ENCODE measurements at regions of chr13 and their contacts with region 1.

Region 1: DNA sequence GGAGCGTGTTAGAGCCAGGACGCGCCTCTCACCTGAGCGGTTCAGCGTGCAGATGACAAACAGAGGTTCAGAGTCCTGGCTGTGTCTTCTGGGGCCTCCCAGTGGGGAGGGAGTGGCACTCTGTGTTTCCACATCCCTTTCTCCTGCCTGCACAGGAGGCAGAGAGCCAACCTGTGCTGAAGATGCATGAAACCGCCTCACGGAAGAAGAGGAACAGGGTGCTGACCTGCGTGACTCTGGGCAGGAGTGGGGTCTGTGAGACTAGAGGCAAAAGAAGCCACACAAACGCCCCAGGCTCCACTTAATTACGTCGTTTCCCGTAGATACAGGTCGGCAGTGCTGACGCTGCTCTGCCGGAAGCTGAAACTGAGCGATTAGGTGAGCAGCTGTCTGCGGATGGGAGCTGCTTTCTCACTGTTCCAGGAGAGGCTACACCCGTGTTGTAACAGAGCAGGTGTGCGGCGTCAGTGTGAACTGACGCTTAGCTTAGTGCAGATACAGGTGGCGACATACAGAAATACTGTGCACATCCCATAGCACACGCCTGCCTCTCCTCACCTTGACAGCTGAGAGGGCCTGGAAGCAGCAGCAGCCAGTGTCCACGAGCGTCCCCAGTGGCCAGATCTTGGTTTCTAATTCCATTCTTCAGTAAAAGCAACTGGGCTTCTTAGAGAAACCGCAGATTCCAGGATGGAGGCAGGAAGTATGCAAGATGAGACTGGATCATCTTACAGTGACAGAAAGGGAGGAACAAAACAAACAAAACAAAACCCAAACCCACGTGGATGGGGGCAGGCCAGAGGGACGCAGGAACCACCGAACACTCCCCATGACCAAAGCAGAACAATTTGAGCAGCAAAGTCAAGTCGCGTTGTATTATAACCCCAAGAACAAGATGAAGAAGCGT is 37.7 kb upstream of the MCF2L start:
- DNase-seq: peak; percentile 80 to 81
- H3K4me3 ChIP-seq: peak overlapping the region; percentile 32
- H3K4me3 Mint-ChIP-seq: peak overlapping the region; percentile 78
- H3K27ac Mint-ChIP-seq: peak overlapping the region; percentile 4
- H3K4me1 ChIP-seq: peaks cover 25% of the 10 kb centered on the region
- H3K4me1 Mint-ChIP-seq: peaks cover 17% of the 10 kb centered on the region
- H3K27me3 ChIP-seq: no peaks in the 10 kb centered on the region
- H3K27me3 Mint-ChIP-seq: no peaks in the 10 kb centered on the region
- CTCF ChIP-seq: peak; percentile 75 to 97

Region 2: DNA sequence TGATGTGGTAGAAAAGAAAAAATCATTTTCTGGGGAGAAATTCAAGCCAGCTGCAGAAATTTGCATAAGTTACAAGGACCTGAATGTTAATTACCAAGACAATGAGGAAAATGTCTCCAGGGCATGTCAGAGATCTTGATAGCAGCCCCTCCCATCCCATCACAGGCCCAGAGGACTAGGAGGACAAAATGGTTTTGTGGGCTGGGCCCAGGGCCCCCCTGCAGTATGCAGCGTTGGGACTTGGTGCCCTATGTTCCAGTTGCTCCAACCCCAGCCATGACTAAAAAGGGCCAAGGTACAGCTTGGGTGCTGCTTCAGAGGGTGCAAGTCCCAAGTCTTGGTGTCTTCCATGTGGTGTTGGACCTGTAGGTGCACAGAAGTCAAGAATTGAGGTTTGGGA is 940.9 kb before region 1 on chr13:
- CTCF ChIA-PET with region 1: no interaction called
- POLR2A ChIA-PET with region 1: no interaction called
- intact Hi-C with region 1: no loop called
- DNase-seq: no peak
- H3K4me3 ChIP-seq: no peak overlapping the region
- H3K4me3 Mint-ChIP-seq: no peak overlapping the region
- H3K27ac Mint-ChIP-seq: no peak overlapping the region
- H3K4me1 ChIP-seq: no peaks in the 10 kb centered on the region
- H3K4me1 Mint-ChIP-seq: no peaks in the 10 kb centered on the region
- H3K27me3 ChIP-seq: no peaks in the 10 kb centered on the region
- H3K27me3 Mint-ChIP-seq: no peaks in the 10 kb centered on the region
- CTCF ChIP-seq: no peak

Region 3: GRCh38 chr13:112893570-112894422 is 37.5 kb before region 1 on chr13:
- CTCF ChIA-PET with region 1: interaction called, 11 read pairs
- POLR2A ChIA-PET with region 1: interaction called, 4 read pairs
- intact Hi-C with region 1: loop called (anchors 1 kb)
- DNase-seq: peak; percentile 85 to 88
- H3K4me3 ChIP-seq: peak overlapping the region; percentile 80
- H3K4me3 Mint-ChIP-seq: peak overlapping the region; percentile 84
- H3K27ac Mint-ChIP-seq: peak overlapping the region; percentile 95
- H3K4me1 ChIP-seq: peaks cover 21% of the 10 kb centered on the region
- H3K4me1 Mint-ChIP-seq: peaks cover 16% of the 10 kb centered on the region
- H3K27me3 ChIP-seq: no peaks in the 10 kb centered on the region
- H3K27me3 Mint-ChIP-seq: no peaks in the 10 kb centered on the region
- CTCF ChIP-seq: peak; percentile 7 to 26

Region 4: GRCh38 chr13:112905990-112906641 is 25.2 kb before region 1 on chr13:
- CTCF ChIA-PET with region 1: interaction called, 9 read pairs
- POLR2A ChIA-PET with region 1: interaction called, 4 read pairs
- intact Hi-C with region 1: loop called (anchors 2 kb)
- DNase-seq: peak in 1 of 2 experiments; percentile 43
- H3K4me3 ChIP-seq: no peak overlapping the region
- H3K4me3 Mint-ChIP-seq: no peak overlapping the region
- H3K27ac Mint-ChIP-seq: peak overlapping the region; percentile 66
- H3K4me1 ChIP-seq: peaks cover 18% of the 10 kb centered on the region; the same call in 1 of the 2 replicates
- H3K4me1 Mint-ChIP-seq: peaks cover 14% of the 10 kb centered on the region
- H3K27me3 ChIP-seq: no peaks in the 10 kb centered on the region
- H3K27me3 Mint-ChIP-seq: no peaks in the 10 kb centered on the region
- CTCF ChIP-seq: no peak

Measured in Caco-2 (cell line).